Aorta (tissue), 5 donors: ENCODE measurements at regions of chr9 and their contacts with region 1.

Region 1: DNA sequence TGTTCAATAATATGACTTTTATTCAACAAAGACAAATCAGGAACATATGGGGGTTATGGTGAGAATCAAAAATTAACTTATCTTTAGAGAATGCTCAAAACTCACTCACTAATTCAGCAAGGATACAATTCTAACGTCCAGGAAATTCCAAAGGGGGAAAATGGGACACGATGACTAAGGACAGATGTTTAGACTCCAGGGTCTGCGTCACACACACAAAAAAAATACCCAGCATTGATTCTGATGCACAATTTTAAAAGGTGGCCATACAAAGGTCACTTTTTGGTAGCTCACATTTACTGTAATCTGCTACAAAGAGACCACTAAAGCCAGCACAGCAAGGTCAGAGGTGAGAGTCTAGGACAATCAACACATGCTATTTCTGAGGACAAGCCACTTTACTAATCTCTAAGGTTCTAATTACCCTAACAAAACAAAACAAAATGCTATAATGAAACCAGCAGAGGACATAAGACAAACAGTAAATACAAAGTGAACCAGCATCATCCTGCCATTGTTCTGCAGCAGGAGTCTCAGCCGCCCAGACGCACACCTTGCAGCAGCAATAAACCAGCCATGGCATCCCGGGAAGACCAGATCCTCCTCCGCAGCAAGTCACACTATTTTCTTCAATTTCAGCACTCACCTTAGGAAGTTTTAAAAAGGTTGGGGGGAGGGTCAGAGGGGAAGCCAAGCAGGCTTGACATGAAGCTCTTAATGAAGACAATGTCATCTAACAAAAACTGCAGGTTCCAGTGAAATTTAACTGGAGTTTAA is 57.8 kb downstream of the TTC39B start:
- DNase-seq: no peak
- ATAC-seq: peak; percentile 47
- H3K4me3 ChIP-seq: peak overlapping the region; percentile 21 to 30
- H3K27ac ChIP-seq: peak overlapping the region; percentile 53 to 77
- H3K4me1 ChIP-seq: peaks cover under 1 to 19% of the 10 kb centered on the region in 2 donors
- H3K27me3 ChIP-seq: no peaks in the 10 kb centered on the region

Region 2: GRCh38 chr9:15155826-15156225 is 93.4 kb before region 1 on chr9:
- intact Hi-C with region 1: loop called in 1 of 2 experiments (anchors 5 kb)
- DNase-seq: peak in 1 of 2 donors; percentile 70
- ATAC-seq: peak; percentile 85
- H3K4me3 ChIP-seq: no peak overlapping the region
- H3K27ac ChIP-seq: peak overlapping the region in 1 of 2 donors; percentile 77
- H3K4me1 ChIP-seq: peaks cover 16 to 19% of the 10 kb centered on the region in 2 donors
- H3K27me3 ChIP-seq: no peaks in the 10 kb centered on the region

Region 3: GRCh38 chr9:15282567-15283285 is 33.5 kb after region 1 on chr9:
- intact Hi-C with region 1: no loop called
- DNase-seq: no peak
- ATAC-seq: no peak
- H3K4me3 ChIP-seq: no peak overlapping the region
- H3K27ac ChIP-seq: no peak overlapping the region
- H3K4me1 ChIP-seq: no peaks in the 10 kb centered on the region
- H3K27me3 ChIP-seq: no peaks in the 10 kb centered on the region